Stomach (tissue), 19 donors: ENCODE measurements at regions of chr6 and their contacts with region 1.

Region 1: DNA sequence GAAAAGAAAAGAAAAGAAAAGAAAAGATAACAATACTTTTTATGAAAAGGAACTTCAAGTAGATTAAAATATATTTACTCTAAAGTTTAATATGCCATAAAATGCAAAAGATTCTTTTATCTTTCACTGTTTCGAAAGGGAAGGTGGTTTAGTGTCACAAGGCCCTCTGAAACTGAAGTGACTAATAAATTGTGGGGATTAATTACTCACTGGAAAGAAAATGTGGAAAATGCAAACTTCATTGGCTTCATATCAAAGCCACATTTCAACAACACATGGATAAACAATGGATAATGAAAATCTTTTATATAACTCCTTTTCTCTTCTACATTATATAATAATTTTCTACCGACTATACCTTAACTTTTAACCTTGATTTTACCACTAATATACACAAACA is 320.5 kb upstream of the RSPO3 start:
- DNase-seq: no peak
- H3K4me3 ChIP-seq: no peak overlapping the region
- H3K27ac ChIP-seq: no peak overlapping the region
- H3K4me1 ChIP-seq: no peaks in the 10 kb centered on the region
- H3K27me3 ChIP-seq: no peaks in the 10 kb centered on the region
- CTCF ChIP-seq: no peak
- EP300 ChIP-seq: no peak
- POLR2A ChIP-seq: no peak

Region 2: DNA sequence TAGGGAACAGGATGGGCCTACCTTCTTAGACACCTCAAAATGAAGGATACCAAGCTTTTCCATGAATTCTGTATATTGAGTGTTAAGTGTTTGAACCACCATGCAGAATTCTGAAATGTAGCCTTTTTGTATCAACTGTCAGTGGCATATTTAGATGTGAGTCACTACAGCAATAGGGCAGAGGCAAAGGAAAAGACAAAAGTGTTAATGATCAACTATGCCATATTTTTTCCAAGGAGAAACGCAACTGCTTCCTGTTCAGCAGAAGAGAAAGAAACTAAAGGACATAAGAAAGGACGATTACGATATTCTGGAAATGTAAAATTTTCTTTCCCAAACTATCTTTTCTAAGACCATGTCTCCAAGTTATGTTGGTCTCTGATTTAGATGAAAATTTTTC is 215.9 kb after region 1 on chr6:
- intact Hi-C with region 1: no loop called
- DNase-seq: no peak
- H3K4me3 ChIP-seq: no peak overlapping the region
- H3K27ac ChIP-seq: no peak overlapping the region
- H3K4me1 ChIP-seq: no peaks in the 10 kb centered on the region
- H3K27me3 ChIP-seq: no peaks in the 10 kb centered on the region
- CTCF ChIP-seq: no peak
- EP300 ChIP-seq: no peak
- POLR2A ChIP-seq: no peak

Region 3: DNA sequence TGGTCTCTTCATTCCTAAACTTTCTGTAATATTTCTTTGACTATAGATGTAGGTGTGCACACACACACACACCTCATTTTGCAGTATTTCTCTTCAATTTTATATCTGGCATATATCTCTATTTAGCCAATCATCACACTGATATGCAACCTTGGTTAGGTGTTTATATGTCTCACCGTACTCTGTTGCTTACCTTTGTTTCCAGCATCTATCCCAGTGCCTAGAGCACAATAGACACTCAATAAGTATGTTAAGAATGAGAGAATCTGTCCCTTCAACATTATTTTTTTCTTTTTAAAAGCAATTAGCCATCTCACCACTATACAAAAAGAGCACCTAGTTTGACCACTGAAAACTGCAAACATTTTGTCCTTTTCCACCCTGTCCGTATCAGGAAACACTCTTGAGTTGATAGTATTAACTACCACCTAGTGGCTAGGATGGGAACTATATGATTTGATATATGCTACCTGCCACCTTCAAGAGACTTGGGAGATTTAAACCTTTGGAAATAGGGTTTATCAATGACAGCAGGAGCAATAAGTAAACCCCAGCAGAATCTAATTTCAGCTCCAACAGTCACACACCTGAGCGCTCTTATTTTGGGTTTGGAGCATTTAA is 271.8 kb after region 1 on chr6:
- intact Hi-C with region 1: loop called (anchors 5 kb)
- DNase-seq: peak in 1 of 2 donors; percentile 45
- H3K4me3 ChIP-seq: no peak overlapping the region
- H3K27ac ChIP-seq: no peak overlapping the region
- H3K4me1 ChIP-seq: no peaks in the 10 kb centered on the region
- H3K27me3 ChIP-seq: no peaks in the 10 kb centered on the region
- CTCF ChIP-seq: peak in 4 of 7 experiments; percentile 26 to 60 (median 51)
- EP300 ChIP-seq: no peak
- POLR2A ChIP-seq: no peak